Adrenal gland (tissue), 19 donors: ENCODE measurements at regions of chr2 and their contacts with region 1.

Region 1: DNA sequence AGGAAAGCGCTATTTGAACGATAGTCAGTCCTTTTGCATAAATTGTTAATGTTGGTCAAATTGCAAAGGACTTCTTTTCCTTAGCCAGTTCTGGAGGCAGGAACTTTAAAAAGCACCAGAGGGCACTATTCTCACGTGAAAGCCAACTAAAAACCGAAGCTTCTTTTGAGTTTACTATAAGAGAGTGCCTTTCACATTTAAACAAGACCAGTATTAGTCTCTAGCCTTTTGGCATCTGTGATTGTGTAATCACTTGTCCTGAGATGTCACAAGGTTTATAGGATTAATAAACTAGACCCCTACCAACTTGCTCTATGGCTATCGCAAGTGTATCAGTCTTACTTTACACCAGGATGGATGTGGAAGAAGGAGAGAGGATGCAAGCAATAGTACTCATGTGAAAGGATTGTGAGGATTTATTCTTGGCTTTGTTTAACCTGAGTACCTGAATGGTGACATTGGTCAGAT is 14.4 kb upstream of the STAT4 start:
- DNase-seq: no peak
- H3K4me3 ChIP-seq: no peak overlapping the region
- H3K27ac ChIP-seq: no peak overlapping the region
- H3K4me1 ChIP-seq: peaks cover 0 to 7% of the 10 kb centered on the region in 2 donors
- H3K27me3 ChIP-seq: no peaks in the 10 kb centered on the region
- CTCF ChIP-seq: peak; percentile 30 to 59 (median 42)
- POLR2A ChIP-seq: no peak

Region 2: DNA sequence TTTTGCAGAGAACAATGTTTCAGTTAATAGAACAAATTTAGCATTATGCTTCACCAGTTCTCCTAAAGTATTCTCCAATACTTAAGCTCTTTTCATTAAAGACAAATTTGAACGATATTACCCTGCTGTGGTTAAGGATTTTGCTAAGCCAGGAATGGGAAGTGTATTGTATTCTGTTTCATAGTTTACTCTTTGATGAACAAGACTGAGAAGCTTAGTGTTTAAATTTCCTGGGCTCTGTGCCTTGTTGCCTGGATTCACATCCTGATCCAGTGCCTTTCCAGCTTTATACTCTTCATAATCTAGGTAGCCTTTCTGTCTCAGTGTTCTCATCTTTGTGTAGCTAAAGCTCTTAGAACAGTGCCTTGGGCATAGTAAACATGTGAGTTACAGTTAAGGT is 343.2 kb before region 1 on chr2:
- intact Hi-C with region 1: no loop called
- DNase-seq: no peak
- H3K4me3 ChIP-seq: no peak overlapping the region
- H3K27ac ChIP-seq: no peak overlapping the region
- H3K4me1 ChIP-seq: no peaks in the 10 kb centered on the region
- H3K27me3 ChIP-seq: no peaks in the 10 kb centered on the region
- CTCF ChIP-seq: no peak
- POLR2A ChIP-seq: no peak

Region 3: DNA sequence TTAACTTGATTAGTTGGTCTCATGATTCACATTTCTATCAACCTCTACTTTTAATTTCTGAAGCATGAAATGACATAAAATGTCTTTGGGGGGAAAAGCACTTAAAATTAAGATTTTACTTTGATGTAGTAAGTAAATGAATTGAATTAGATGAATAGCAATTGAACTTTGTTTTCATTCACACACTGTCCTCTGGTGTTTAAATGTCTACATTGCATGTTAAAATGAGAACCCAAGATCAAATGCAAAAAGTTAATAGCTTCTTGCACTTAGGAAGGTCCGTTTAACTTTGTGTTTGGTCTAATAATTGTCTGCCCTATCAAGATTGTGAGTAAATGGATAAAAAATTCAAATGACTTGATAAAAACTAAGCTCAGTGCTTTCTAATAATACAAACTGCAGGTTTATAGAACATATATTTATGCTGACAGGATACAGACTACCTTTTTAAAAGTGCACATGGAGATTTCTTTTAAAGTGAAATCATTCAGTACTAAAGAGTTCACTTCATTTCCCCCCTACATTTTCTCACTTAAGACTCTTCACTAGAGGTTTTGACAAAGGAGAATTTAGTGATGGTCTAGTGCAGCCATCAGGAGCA is 356.5 kb after region 1 on chr2:
- intact Hi-C with region 1: loop called in 1 of 2 experiments (anchors 10 kb)
- DNase-seq: no peak
- H3K4me3 ChIP-seq: no peak overlapping the region
- H3K27ac ChIP-seq: no peak overlapping the region
- H3K4me1 ChIP-seq: no peaks in the 10 kb centered on the region
- H3K27me3 ChIP-seq: no peaks in the 10 kb centered on the region
- CTCF ChIP-seq: peak; percentile 52 to 81 (median 76)
- POLR2A ChIP-seq: no peak